ENCODE measurements at regions of chrX and their contacts with region 1.

Region 1: DNA sequence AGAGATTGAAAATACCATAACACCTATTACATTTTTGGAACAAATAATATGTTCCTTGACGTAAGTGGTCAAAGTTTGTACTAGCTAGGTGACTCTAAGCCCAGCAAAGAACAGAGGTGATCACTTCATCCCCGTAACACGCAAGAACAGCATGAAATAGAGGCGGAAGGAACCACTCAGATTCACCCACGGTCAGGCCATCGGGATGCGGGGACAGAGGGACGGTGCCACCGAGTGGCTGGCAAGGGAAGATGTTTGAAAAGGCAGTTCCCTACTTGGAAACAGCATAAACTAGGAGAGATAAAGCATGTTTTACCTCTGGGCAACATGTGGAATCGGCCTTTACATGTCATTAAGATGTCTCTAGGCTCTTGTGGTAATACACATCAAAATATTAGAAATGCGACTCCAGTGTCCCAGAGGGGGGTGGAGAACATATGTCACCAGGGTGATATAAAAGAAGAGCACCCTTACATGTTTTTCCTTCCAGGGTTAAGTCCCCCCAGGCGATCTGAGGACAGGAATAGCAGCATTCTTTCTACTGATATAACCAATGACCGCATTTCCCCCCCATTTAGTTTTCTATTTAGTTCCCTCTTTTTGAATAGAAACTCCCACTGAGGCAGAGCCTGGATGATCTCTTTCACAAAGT is 84.0 kb downstream of the PHKA2 start:
- DNase-seq: no peak
- ATAC-seq: no peak
- H3K4me3 ChIP-seq: no peak overlapping the region
- H3K27ac ChIP-seq: no peak overlapping the region
- H3K4me1 ChIP-seq: no peaks in the 10 kb centered on the region
- H3K27me3 ChIP-seq: no peaks in the 10 kb centered on the region
- CTCF ChIP-seq: peak; percentile 58

Region 2: GRCh38 chrX:18390941-18391538 is 508.9 kb before region 1 on chrX:
- CTCF ChIA-PET with region 1: no interaction called
- POLR2A ChIA-PET with region 1: no interaction called
- intact Hi-C with region 1: loop called (anchors 2 kb)
- DNase-seq: peak; percentile 67
- ATAC-seq: peak; percentile 54; the same call in 1 of the 2 replicates
- H3K4me3 ChIP-seq: no peak overlapping the region
- H3K27ac ChIP-seq: no peak overlapping the region
- H3K4me1 ChIP-seq: no peaks in the 10 kb centered on the region
- H3K27me3 ChIP-seq: no peaks in the 10 kb centered on the region
- CTCF ChIP-seq: peak; percentile 78